KBM-7 (cell line): ENCODE measurements at regions of chr6 and their contacts with region 1.

Region 1: GRCh38 chr6:73129653-73130443 is 95.4 kb downstream of the KHDC1L start:
- DNase-seq: peak; percentile 78

Region 2: GRCh38 chr6:72624557-72625160 is 505.2 kb before region 1 on chr6:
- in situ Hi-C with region 1: loop called (anchors 25 kb)
- DNase-seq: peak; percentile 70

Region 3: DNA sequence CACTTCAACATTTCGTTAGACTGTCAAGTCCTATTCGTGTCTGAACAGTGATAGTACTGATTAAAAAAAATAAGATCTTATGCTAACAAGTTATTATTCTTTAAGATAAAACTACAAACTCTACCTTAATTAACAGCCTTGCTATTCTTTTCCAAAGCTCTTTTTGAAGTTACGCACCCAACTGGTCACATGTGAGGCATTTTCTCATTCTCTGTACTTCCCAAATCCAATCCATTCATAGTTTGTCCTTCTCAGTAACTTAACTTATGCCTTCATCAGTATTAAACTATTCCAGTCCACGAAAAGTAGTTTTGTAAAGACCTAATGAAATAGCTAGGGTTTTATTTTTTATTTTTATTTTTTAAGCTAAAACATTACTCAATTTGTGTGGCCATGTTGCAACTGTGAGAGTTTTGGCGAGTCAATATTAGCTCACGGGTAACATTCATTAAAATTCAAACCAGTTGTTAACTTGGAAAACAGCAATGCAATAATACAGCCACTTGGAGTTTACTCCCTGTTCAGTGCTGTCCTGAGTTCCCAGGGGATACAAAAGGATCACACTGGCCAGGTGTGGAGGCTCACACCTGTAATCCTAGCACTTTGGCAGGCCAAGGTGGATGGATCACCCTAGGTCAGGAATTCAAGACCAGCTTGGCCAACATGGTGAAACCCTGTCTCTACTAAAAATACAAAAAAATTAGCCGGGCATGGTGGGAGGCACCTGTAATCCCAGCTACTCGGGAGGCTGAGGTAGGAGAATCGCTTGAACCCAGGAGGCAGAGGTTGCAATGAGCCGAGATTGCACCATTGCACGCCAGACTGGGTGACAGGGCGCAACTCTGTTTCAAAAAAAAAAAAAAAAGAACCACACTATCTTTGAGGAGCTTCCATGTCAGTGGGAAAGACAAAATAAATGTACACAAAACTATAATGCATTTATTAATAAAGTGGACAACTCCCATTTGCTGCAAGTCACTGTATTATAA is 418.9 kb after region 1 on chr6:
- in situ Hi-C with region 1: no loop called
- DNase-seq: no peak

Region 4: GRCh38 chr6:73695619-73696421 is 566.0 kb after region 1 on chr6 and contains the start of gene CD109:
- in situ Hi-C with region 1: no loop called
- DNase-seq: peak; percentile 77

Region 5: DNA sequence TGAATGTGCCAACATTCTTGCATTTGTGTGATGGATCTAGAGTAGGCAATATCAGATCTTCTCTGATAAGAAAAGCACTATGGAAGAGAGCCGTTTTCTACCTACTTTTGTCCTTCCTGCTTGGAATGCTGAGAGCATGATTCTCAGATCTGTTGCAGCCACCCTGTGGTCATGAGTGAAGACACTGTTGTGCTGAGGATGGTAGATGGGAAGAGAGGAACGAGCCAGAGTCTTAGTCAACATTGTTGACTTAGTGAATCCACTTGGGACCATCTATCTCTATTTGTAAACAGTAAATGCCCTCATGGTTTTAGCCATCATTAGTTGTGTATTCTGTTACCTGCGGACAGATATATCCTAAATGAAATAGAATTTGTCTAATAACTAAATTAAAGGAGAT is 768.8 kb after region 1 on chr6:
- in situ Hi-C with region 1: no loop called
- DNase-seq: no peak

Region 6: GRCh38 chr6:73989428-73989827 is 859.6 kb after region 1 on chr6:
- in situ Hi-C with region 1: no loop called
- DNase-seq: no peak